B cell (primary cell): ENCODE measurements at regions of chr17 and their contacts with region 1.

Region 1: DNA sequence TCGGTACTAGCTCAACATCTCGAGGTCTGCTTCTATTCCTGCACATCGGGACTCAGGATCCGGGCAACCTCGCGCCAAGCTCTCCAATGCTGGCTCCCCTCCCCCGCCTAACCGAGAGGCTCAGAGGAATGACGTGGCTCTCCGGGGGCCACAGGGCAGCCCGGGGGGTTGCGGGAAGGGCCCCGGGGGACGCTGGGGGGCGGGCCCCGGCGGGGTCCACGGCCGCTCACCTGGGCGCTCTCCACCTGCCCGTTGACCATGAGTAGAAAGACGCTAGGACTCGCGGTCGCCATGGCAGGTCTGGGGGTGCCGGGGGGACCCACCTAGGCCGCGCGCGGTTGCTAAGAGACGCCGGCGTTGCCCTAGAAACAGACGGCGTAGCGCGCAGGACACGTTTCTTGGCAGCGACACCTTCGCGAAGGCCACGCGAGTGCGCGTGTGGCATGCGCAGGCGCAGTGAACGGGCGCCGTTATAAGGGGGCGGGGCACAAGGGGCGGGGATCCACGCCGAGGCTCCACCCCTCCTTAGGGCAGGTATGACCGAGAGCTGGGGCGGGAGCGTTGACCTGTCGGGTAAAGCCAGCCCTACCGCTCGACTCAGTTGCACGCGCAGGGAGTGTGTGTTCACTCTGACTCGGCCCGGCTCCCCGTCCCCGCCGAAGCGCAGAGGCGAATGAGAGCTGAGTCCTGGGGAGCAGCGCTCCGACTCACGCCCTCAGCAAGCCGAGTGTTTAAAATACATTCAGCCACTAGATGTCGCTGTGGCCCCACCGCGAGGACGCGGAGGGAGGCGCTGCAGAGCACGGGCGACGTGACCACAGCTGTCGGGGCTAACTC is at the start of gene B9D1:
- DNase-seq: peak; percentile 98
- ATAC-seq: peak; percentile 93
- H3K4me3 ChIP-seq: peak within 1 kb of the TSS; percentile 35 to 84 (median 69)
- H3K4me3 Mint-ChIP-seq: peak within 1 kb of the TSS; percentile 98
- H3K27ac ChIP-seq: peak within 1 kb of the TSS; percentile 20 to 82
- H3K27ac Mint-ChIP-seq: peak within 1 kb of the TSS; percentile 93
- H3K4me1 ChIP-seq: peaks cover 7 to 17% of the 10 kb centered on the region in 2 donors
- H3K4me1 Mint-ChIP-seq: peaks cover 19% of the 10 kb centered on the region
- H3K27me3 ChIP-seq: peaks cover 0 to 8% (median 0%) of the 10 kb centered on the region in 4 experiments
- H3K27me3 Mint-ChIP-seq: peaks cover 13% of the 10 kb centered on the region
- CTCF ChIP-seq: peak; percentile 98
- total RNA-seq, gene B9D1: 6.9 and 7.4 TPM in 2 replicates

Region 2: GRCh38 chr17:19295473-19296135 is 66.9 kb before region 1 on chr17:
- CTCF ChIA-PET with region 1: no interaction called
- POLR2A ChIA-PET with region 1: no interaction called
- intact Hi-C with region 1: no loop called
- DNase-seq: no peak
- ATAC-seq: no peak
- H3K4me3 ChIP-seq: no peak overlapping the region
- H3K4me3 Mint-ChIP-seq: no peak overlapping the region
- H3K27ac ChIP-seq: no peak overlapping the region
- H3K27ac Mint-ChIP-seq: no peak overlapping the region
- H3K4me1 ChIP-seq: no peaks in the 10 kb centered on the region
- H3K4me1 Mint-ChIP-seq: peaks cover 4% of the 10 kb centered on the region
- H3K27me3 ChIP-seq: peaks cover 0 to 9% (median 4%) of the 10 kb centered on the region in 4 experiments
- H3K27me3 Mint-ChIP-seq: peaks cover 4% of the 10 kb centered on the region
- CTCF ChIP-seq: no peak

Region 3: DNA sequence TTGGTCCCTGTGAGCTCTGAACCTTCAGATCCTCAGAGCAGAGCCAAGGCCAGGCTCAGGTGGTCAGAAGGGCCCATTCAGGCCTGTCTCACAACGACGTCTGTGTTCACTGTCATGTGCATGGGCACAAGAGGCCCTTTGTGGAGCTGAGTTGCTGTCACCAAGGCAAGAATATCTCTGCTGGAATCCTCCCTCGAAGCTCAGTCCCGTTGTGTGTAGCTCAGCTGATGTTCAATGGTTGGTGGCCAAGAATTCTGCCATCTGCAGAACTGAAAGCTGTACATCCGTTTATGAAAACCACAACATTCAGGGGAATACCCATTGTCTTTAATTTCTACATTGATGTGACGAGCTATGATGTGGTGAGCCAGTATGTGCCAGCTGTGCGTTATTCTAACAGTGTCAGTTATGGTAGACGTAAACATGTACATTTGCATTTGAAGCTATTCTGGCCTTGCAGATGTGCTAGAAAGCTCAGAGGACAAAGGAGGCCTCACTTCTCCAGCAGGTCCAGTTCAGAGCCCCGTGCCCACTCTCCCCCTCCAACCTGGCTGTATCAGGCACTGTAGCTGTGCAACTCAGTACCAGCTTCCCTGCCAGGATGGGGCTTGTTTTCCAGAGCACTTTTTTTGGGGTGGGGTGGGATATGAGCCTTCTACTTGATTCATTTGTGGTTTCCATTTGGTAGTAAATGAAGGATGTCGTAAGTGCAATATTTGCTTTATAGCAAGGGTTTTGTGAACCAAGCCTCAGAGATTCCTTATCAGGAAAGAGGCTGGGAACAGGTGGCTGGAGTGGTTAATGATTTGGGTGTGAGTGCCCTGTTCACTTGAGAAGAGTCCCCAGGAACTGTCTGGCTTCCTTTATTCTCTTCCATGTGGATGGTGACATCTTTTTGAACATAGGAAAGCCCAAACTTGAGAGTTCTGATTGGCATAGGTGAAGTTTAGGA is 56.1 kb before region 1 on chr17:
- CTCF ChIA-PET with region 1: interaction called, 9 read pairs
- POLR2A ChIA-PET with region 1: interaction called, 3 read pairs
- intact Hi-C with region 1: loop called (anchors 2 kb)
- DNase-seq: peak; percentile 93
- ATAC-seq: peak; percentile 86
- H3K4me3 ChIP-seq: peak overlapping the region in 1 of 5 experiments; percentile 16
- H3K4me3 Mint-ChIP-seq: peak overlapping the region; percentile 75
- H3K27ac ChIP-seq: peak overlapping the region; percentile 41 to 48
- H3K27ac Mint-ChIP-seq: peak overlapping the region; percentile 81
- H3K4me1 ChIP-seq: peaks cover 68 to 69% of the 10 kb centered on the region in 2 donors
- H3K4me1 Mint-ChIP-seq: peaks cover 67% of the 10 kb centered on the region
- H3K27me3 ChIP-seq: peaks cover 0 to 25% (median 3%) of the 10 kb centered on the region in 4 experiments
- H3K27me3 Mint-ChIP-seq: no peaks in the 10 kb centered on the region
- CTCF ChIP-seq: no peak

Region 4: GRCh38 chr17:19377602-19378392 is 15.3 kb after region 1 on chr17:
- CTCF ChIA-PET with region 1: interaction called, 110 read pairs
- POLR2A ChIA-PET with region 1: interaction called, 30 read pairs
- intact Hi-C with region 1: loop called (anchors 1 kb)
- DNase-seq: peak; percentile 98
- ATAC-seq: peak; percentile 93
- H3K4me3 ChIP-seq: peak overlapping the region; percentile 77 to 96 (median 91)
- H3K4me3 Mint-ChIP-seq: peak overlapping the region; percentile 99
- H3K27ac ChIP-seq: peak overlapping the region; percentile 86 to 95
- H3K27ac Mint-ChIP-seq: peak overlapping the region; percentile 99
- H3K4me1 ChIP-seq: peaks cover 16 to 24% of the 10 kb centered on the region in 2 donors
- H3K4me1 Mint-ChIP-seq: peaks cover 31% of the 10 kb centered on the region
- H3K27me3 ChIP-seq: no peaks in the 10 kb centered on the region
- H3K27me3 Mint-ChIP-seq: no peaks in the 10 kb centered on the region
- CTCF ChIP-seq: no peak

Region 5: DNA sequence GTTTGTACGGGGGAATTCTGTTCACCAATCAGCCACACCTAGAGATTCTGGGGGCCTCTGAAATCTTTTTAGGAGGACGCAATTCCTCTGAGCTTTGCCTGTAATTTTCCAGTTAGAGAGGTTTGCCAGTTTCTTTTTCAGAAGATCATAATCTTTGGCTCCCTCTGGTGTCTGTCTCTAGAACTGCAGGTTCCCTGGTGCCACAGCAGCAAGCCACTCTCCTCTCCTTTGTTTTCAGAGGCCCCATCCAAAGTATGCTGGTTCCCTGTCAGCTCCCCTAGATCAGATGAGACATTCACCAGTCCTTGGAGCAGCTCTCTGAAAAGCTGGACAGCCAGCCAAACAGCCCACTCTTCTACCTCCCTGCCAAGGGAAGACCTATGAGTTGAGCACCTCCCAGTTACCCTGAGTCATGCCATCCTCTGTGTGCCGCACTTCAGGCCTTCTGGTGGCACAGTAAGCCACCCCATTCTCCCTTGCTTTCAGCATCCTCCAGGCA is 84.6 kb after region 1 on chr17:
- CTCF ChIA-PET with region 1: interaction called, 133 read pairs
- POLR2A ChIA-PET with region 1: no interaction called
- intact Hi-C with region 1: loop called (anchors 1 kb)
- DNase-seq: peak; percentile 80
- ATAC-seq: peak; percentile 71
- H3K4me3 ChIP-seq: no peak overlapping the region
- H3K4me3 Mint-ChIP-seq: no peak overlapping the region
- H3K27ac ChIP-seq: no peak overlapping the region
- H3K27ac Mint-ChIP-seq: no peak overlapping the region
- H3K4me1 ChIP-seq: no peaks in the 10 kb centered on the region
- H3K4me1 Mint-ChIP-seq: no peaks in the 10 kb centered on the region
- H3K27me3 ChIP-seq: peaks cover 0 to 15% (median 5%) of the 10 kb centered on the region in 4 experiments
- H3K27me3 Mint-ChIP-seq: peaks cover 22% of the 10 kb centered on the region
- CTCF ChIP-seq: peak; percentile 92

Region 6: GRCh38 chr17:19470532-19471261 is 108.2 kb after region 1 on chr17:
- CTCF ChIA-PET with region 1: interaction called, 19 read pairs
- POLR2A ChIA-PET with region 1: no interaction called
- intact Hi-C with region 1: no loop called
- DNase-seq: no peak
- ATAC-seq: no peak
- H3K4me3 ChIP-seq: no peak overlapping the region
- H3K4me3 Mint-ChIP-seq: no peak overlapping the region
- H3K27ac ChIP-seq: no peak overlapping the region
- H3K27ac Mint-ChIP-seq: no peak overlapping the region
- H3K4me1 ChIP-seq: peaks cover 0 to 2% of the 10 kb centered on the region in 2 donors
- H3K4me1 Mint-ChIP-seq: peaks cover 1% of the 10 kb centered on the region
- H3K27me3 ChIP-seq: no peaks in the 10 kb centered on the region
- H3K27me3 Mint-ChIP-seq: no peaks in the 10 kb centered on the region
- CTCF ChIP-seq: no peak

Region 7: DNA sequence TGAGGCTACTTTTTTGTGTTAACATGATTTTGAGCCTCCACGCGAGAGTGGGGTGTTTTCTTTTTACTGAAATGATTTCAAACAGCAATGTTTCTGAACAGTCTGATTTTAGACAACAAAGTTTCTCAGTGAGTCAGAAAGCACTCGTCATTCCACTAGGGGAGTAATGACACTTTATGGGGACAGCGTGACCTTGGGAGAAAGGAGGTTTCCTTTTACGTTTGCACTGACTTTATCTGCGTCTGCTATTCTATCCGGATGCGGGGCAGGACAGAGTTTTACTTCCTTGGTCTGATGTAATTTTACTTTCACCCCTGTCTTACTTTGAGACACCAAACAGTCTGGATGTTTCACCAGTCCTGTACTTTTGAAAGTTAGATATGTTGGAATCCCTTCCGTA is 191.9 kb after region 1 on chr17:
- CTCF ChIA-PET with region 1: no interaction called
- POLR2A ChIA-PET with region 1: no interaction called
- intact Hi-C with region 1: no loop called
- DNase-seq: no peak
- ATAC-seq: no peak
- H3K4me3 ChIP-seq: no peak overlapping the region
- H3K4me3 Mint-ChIP-seq: no peak overlapping the region
- H3K27ac ChIP-seq: no peak overlapping the region
- H3K27ac Mint-ChIP-seq: no peak overlapping the region
- H3K4me1 ChIP-seq: no peaks in the 10 kb centered on the region
- H3K4me1 Mint-ChIP-seq: no peaks in the 10 kb centered on the region
- H3K27me3 ChIP-seq: peaks cover 0 to 5% (median 0%) of the 10 kb centered on the region in 4 experiments
- H3K27me3 Mint-ChIP-seq: peaks cover 29% of the 10 kb centered on the region
- CTCF ChIP-seq: no peak

Region 8: GRCh38 chr17:19569785-19570543 is 207.5 kb after region 1 on chr17:
- CTCF ChIA-PET with region 1: no interaction called
- POLR2A ChIA-PET with region 1: no interaction called
- intact Hi-C with region 1: loop called (anchors 2 kb)
- DNase-seq: peak; percentile 70
- ATAC-seq: peak; percentile 84
- H3K4me3 ChIP-seq: peak overlapping the region in 2 of 5 experiments; percentile 10 to 45
- H3K4me3 Mint-ChIP-seq: peak overlapping the region; percentile 38
- H3K27ac ChIP-seq: peak overlapping the region; percentile 68 to 96
- H3K27ac Mint-ChIP-seq: peak overlapping the region; percentile 87
- H3K4me1 ChIP-seq: peaks cover 22 to 23% of the 10 kb centered on the region in 2 donors
- H3K4me1 Mint-ChIP-seq: peaks cover 20% of the 10 kb centered on the region
- H3K27me3 ChIP-seq: no peaks in the 10 kb centered on the region
- H3K27me3 Mint-ChIP-seq: peaks cover 3% of the 10 kb centered on the region
- CTCF ChIP-seq: no peak

Region 9: GRCh38 chr17:19766422-19767270 is 404.2 kb after region 1 on chr17:
- CTCF ChIA-PET with region 1: interaction called, 114 read pairs
- POLR2A ChIA-PET with region 1: no interaction called
- intact Hi-C with region 1: loop called (anchors 1 kb)
- DNase-seq: peak; percentile 80
- ATAC-seq: peak; percentile 88
- H3K4me3 ChIP-seq: no peak overlapping the region
- H3K4me3 Mint-ChIP-seq: no peak overlapping the region
- H3K27ac ChIP-seq: no peak overlapping the region
- H3K27ac Mint-ChIP-seq: peak overlapping the region; percentile 50
- H3K4me1 ChIP-seq: peaks cover 0 to 7% of the 10 kb centered on the region in 2 donors
- H3K4me1 Mint-ChIP-seq: no peaks in the 10 kb centered on the region
- H3K27me3 ChIP-seq: no peaks in the 10 kb centered on the region
- H3K27me3 Mint-ChIP-seq: no peaks in the 10 kb centered on the region
- CTCF ChIP-seq: peak; percentile 97